Astrocyte of the cerebellum (primary cell): ENCODE measurements at regions of chr3 and their contacts with region 1.

Region 1: DNA sequence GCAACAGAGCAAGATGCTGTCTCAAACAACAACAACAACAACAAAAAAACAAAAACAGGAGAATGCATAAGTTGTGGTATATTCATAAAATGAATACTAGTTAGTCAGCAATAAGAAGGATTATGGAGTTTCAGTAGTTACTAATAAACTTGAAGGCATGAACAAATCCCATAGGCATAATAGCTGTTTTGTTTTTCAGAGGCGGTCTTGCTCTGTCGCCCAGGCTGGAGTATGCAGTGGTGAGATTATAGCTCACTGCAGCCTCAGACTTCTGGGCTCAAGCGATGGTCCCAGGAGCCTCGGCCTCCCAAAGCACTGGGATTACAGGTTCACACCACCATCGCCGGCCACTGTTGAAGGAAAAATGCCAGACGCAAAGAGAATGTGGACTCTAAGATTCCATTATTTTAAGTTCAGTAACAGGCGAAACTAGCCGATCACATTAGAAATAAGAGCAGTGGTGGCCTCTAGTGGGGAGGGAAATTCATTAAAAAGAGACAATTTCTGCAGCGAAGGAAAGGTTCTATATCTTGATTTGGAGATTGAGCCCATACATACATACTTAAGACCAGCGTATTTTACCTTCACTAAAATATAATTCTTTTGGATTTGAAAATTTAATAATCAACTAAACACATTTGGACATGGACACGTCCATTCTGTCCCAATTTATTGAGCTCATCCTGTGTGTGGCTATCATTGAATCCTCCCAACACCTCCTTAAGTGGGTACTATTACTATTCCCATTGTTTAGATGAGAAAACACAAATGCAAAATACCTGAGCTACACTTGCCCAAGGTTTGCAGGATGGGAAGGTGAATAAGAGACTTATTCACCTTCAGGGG is 27.4 kb upstream of the HDAC11 start:
- DNase-seq: peak; percentile 29
- H3K4me3 ChIP-seq: no peak overlapping the region
- CTCF ChIP-seq: peak; percentile 60

Region 2: DNA sequence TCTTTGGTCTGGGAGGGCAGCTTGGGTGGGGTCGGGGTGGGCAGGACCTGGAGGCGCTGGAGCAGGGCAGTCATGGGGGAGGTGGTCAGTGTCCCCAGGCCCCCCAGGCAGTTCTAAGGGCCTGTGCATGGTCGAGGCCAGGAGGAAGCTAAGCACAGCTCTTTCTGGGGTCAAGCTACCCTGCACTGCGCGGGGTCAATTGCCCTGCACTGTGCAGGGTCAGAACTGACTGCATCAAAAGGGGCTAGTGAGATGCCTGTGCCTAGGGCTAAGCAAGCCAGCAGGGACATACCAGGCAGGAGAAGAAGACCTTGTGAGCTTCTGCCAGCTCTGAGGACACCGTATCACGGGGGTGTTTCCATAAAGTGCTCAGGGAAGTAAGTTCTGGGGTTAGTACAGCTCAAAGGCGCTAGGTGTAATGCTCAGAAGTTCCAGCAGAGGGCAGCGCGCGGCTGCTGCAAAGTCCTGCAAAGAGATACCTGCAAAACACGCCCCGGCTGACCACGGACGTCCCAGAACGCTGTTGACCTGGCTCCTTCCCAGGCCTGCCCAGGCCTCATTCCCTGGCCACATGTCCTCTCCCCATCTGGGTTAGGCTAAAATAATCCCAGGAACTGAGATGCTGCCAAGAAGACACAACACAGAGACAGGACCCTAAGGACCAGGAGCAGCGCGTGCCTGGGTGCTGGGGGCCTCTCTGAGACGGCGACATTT is 360.7 kb before region 1 on chr3:
- in situ Hi-C with region 1: loop called (anchors 25 kb)
- DNase-seq: peak; percentile 40
- H3K4me3 ChIP-seq: no peak overlapping the region
- CTCF ChIP-seq: peak; percentile 95

Region 3: GRCh38 chr3:13740795-13741194 is 288.1 kb after region 1 on chr3:
- in situ Hi-C with region 1: no loop called
- DNase-seq: no peak
- H3K4me3 ChIP-seq: no peak overlapping the region
- CTCF ChIP-seq: no peak